ENCODE measurements at regions of chr1 and their contacts with region 1.

Region 1: GRCh38 chr1:213095467-213095866 is 44.4 kb downstream of the RPS6KC1 start:
- DNase-seq: no peak
- ATAC-seq: no peak
- H3K4me3 ChIP-seq: no peak overlapping the region
- H3K4me3 Mint-ChIP-seq: no peak overlapping the region
- H3K27ac ChIP-seq: no peak overlapping the region
- H3K27ac Mint-ChIP-seq: no peak overlapping the region
- H3K4me1 ChIP-seq: no peaks in the 10 kb centered on the region
- H3K4me1 Mint-ChIP-seq: no peaks in the 10 kb centered on the region
- H3K27me3 ChIP-seq: no peaks in the 10 kb centered on the region
- H3K27me3 Mint-ChIP-seq: no peaks in the 10 kb centered on the region

Region 2: GRCh38 chr1:212465311-212465710 is 630.2 kb before region 1 on chr1:
- CTCF ChIA-PET with region 1: no interaction called
- POLR2A ChIA-PET with region 1: interaction called in 1 of 2 experiments, 10 read pairs
- DNase-seq: no peak
- ATAC-seq: no peak
- H3K4me3 ChIP-seq: no peak overlapping the region
- H3K4me3 Mint-ChIP-seq: no peak overlapping the region
- H3K27ac ChIP-seq: no peak overlapping the region
- H3K27ac Mint-ChIP-seq: no peak overlapping the region
- H3K4me1 ChIP-seq: no peaks in the 10 kb centered on the region
- H3K4me1 Mint-ChIP-seq: no peaks in the 10 kb centered on the region
- H3K27me3 ChIP-seq: peaks cover 0 to 20% of the 10 kb centered on the region in 2 experiments
- H3K27me3 Mint-ChIP-seq: no peaks in the 10 kb centered on the region

Region 3: DNA sequence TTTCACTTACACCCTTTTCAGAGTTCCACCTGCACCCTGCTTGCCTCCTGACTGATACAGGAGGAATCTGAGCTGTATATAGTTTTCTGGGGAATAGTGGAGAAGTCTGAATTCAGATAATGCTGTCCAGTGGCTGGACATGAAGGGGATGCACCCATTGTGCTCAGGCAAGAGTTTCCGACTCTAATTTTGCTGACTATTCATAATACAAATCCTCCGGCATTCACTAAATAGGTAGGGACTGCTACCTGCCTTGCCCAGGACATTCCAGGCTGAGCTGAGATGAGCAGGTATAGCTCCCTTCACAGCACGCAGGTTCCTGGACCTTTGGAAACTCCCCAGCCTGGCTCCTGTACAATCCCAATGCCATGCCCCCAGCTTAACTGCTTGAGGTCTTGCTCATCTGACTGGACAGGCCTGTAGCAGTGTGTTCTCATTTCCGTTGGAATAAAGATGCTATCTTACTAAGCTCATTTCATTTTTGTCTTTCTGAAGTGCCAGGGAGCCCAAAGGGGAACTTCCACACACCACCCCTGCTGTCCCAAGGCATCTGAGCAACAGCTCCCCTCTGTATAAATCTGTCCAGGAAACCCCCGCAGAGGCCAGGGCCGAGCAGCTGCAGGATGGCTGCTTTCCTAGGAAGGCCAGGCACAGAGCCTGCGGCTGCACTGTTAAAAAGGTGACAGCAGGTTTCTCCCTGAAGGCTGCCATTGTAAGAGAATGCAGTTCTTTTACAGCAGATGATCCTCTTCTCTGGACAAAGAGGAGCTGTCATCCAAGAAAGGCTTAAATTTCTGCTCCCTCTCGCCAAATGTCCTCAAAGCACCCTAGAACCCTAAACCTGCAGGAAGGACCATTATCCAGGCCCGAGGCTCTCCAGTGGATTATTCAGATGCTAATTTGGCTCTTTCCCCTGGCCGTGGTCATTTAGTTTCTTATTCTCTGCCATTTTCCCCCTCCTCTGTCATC is 166.9 kb before region 1 on chr1:
- CTCF ChIA-PET with region 1: no interaction called
- POLR2A ChIA-PET with region 1: no interaction called
- DNase-seq: no peak
- ATAC-seq: no peak
- H3K4me3 ChIP-seq: no peak overlapping the region
- H3K4me3 Mint-ChIP-seq: no peak overlapping the region
- H3K27ac ChIP-seq: no peak overlapping the region
- H3K27ac Mint-ChIP-seq: no peak overlapping the region
- H3K4me1 ChIP-seq: no peaks in the 10 kb centered on the region
- H3K4me1 Mint-ChIP-seq: peaks cover 0 to 3% (median 0%) of the 10 kb centered on the region in 3 donors
- H3K27me3 ChIP-seq: peaks cover 0 to 7% of the 10 kb centered on the region in 2 experiments
- H3K27me3 Mint-ChIP-seq: peaks cover 0 to 3% of the 10 kb centered on the region in 2 donors

Region 4: DNA sequence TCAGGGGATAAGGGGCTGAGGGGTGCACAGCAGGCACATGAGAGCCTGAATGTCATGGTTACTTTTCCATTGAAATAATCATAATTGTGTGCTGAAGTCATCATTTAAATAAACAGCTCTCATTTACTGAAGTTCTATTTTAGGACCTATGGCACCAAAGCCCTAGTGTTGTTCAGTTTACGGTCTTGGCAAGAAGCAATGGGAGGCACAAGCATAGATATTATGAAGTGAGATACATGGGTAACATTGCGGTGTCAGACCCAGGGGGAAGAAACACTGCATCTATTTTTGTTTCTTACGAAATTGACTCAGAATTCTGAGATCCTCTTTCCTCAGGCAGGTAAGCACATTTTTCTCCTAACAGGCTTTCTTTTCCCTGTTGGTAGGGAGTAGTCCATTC is 454.5 kb after region 1 on chr1:
- CTCF ChIA-PET with region 1: no interaction called
- POLR2A ChIA-PET with region 1: no interaction called
- DNase-seq: no peak
- ATAC-seq: no peak
- H3K4me3 ChIP-seq: no peak overlapping the region
- H3K4me3 Mint-ChIP-seq: no peak overlapping the region
- H3K27ac ChIP-seq: no peak overlapping the region
- H3K27ac Mint-ChIP-seq: no peak overlapping the region
- H3K4me1 ChIP-seq: no peaks in the 10 kb centered on the region
- H3K4me1 Mint-ChIP-seq: no peaks in the 10 kb centered on the region
- H3K27me3 ChIP-seq: no peaks in the 10 kb centered on the region
- H3K27me3 Mint-ChIP-seq: peaks cover 0 to 8% of the 10 kb centered on the region in 2 donors

Measured in T-cell (primary cell).